Naive thymus-derived CD4-positive, alpha-beta T cell (primary cell): ENCODE measurements at regions of chr5 and their contacts with region 1.

Region 1: GRCh38 chr5:159286420-159287035 is 23.4 kb downstream of the UBLCP1 start:
- DNase-seq: peak in 7 of 9 donors; percentile 16 to 53 (median 34)
- ATAC-seq: peak; percentile 60
- H3K4me3 ChIP-seq: no peak overlapping the region
- H3K4me3 Mint-ChIP-seq: no peak overlapping the region
- H3K27ac ChIP-seq: no peak overlapping the region
- H3K27ac Mint-ChIP-seq: peak overlapping the region in 1 of 9 donors; percentile 19
- H3K4me1 ChIP-seq: no peaks in the 10 kb centered on the region
- H3K4me1 Mint-ChIP-seq: peaks cover 0 to 1% (median 0%) of the 10 kb centered on the region in 7 donors
- H3K27me3 ChIP-seq: no peaks in the 10 kb centered on the region
- H3K27me3 Mint-ChIP-seq: peaks cover 0 to 4% (median 0%) of the 10 kb centered on the region in 5 donors

Region 2: DNA sequence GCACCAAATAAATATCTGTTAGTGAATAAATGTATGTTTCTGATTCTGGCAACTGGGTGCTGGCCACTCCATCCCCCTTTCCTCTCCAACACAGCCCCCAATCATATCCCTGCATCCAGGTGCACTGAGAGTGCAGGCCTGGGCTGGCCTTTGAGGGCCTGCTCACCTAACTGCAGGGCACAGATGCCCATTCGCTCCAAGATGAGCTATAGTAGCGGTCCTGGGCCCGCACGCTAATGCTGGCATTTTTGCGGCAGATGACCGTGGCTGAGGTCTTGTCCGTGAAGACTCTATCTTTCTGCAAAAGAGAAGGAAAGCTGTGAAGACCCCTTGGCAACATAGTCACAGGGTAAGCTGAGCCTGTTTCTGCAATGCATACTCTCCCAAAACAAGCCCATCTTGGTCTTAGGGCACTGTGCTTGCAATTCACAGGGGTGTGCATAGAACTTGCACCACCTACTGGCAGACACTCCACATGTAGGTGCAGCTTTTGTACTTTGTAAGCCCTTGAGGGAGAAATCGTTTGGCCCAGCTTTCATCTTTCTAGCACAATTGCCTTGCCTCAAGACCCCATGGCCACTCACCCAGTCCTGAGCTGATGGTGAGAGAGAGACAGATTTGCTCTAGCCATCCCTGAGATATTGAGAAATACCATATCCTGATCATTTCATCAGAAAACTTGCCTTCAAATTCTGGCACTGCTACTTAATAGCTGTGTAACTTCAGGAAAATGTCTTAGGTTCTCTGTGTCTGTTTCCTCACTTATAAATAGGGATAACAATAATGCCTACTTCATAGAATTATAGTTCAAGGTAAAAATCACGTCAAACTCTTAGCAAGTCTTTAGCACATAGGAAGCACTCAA is 30.2 kb after region 1 on chr5:
- CTCF ChIA-PET with region 1: interaction called, 6 read pairs
- POLR2A ChIA-PET with region 1: no interaction called
- intact Hi-C with region 1: loop called in 1 of 2 experiments (anchors 1 kb)
- DNase-seq: peak in 7 of 9 donors; percentile 15 to 50 (median 31)
- ATAC-seq: peak; percentile 73
- H3K4me3 ChIP-seq: no peak overlapping the region
- H3K4me3 Mint-ChIP-seq: no peak overlapping the region
- H3K27ac ChIP-seq: no peak overlapping the region
- H3K27ac Mint-ChIP-seq: no peak overlapping the region
- H3K4me1 ChIP-seq: no peaks in the 10 kb centered on the region
- H3K4me1 Mint-ChIP-seq: peaks cover 0 to 4% (median 0%) of the 10 kb centered on the region in 7 donors
- H3K27me3 ChIP-seq: no peaks in the 10 kb centered on the region
- H3K27me3 Mint-ChIP-seq: peaks cover 0 to 36% (median 4%) of the 10 kb centered on the region in 5 donors

Region 3: DNA sequence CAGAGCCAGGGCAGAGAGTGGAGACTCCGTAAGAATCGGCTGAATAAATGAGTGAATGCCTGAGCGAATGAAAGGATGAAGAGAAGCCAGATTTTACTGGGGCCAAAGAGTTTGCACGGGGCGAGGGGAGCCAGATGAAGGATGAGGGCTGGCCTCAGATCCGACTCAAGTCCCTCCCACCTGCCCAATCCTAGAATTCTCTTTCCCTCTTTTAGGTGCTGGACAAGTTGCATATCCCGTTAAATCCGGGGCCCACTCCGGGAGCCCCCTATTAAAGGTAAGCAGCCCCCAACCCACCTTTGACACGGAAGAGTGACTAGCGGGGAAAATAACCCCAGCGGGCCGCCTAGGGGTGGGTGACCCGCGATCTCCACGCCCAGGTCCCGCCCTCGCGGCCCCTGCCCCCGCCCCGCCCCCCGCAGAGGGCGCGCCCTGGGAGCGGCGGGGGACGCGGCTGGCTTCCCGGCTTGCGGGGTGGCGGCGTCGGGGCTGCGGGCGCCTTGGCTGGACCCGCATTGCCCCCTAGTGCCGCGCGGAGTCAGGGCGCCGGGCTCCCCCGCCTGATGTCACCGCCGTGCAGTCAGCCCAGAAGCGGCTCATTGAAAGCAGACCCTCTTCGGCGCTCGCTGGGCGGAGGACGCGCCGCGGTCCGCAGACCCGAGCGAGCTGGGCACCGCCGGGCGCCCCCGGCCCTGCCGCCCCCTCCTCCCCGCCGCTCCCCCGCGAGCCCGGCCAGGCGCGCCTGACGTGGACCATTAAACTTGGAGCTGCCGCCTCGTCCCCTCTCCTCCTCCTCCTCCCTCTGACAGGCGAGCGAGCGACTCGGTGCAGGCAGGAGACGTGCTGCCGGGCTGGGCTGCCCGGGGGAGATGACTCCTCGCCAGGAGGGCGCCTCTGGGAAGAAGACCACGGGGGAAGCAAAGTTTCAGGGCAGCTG is 629.6 kb after region 1 on chr5 and contains the start of gene ADRA1B:
- CTCF ChIA-PET with region 1: no interaction called
- POLR2A ChIA-PET with region 1: no interaction called
- intact Hi-C with region 1: loop called (anchors 1 to 5 kb)
- DNase-seq: peak in 8 of 9 donors; percentile 16 to 47 (median 22)
- ATAC-seq: peak; percentile 77
- H3K4me3 ChIP-seq: no peak within 1 kb of the TSS
- H3K4me3 Mint-ChIP-seq: peak within 1 kb of the TSS; percentile 56 to 78 (median 71)
- H3K27ac ChIP-seq: no peak within 1 kb of the TSS
- H3K27ac Mint-ChIP-seq: no peak within 1 kb of the TSS
- H3K4me1 ChIP-seq: no peaks in the 10 kb centered on the region
- H3K4me1 Mint-ChIP-seq: peaks cover 4 to 15% (median 9%) of the 10 kb centered on the region in 7 donors
- H3K27me3 ChIP-seq: peaks cover 3 to 8% of the 10 kb centered on the region in 2 donors
- H3K27me3 Mint-ChIP-seq: peaks cover 59 to 67% (median 62%) of the 10 kb centered on the region in 5 donors
- total RNA-seq, gene ADRA1B: 0.10 TPM in 1 of 5 experiments, not detected in the others

Region 4: GRCh38 chr5:159965031-159965837 is 678.7 kb after region 1 on chr5:
- CTCF ChIA-PET with region 1: no interaction called
- POLR2A ChIA-PET with region 1: no interaction called
- intact Hi-C with region 1: loop called in 1 of 2 experiments (anchors 2 kb)
- DNase-seq: peak in 2 of 9 donors; percentile 13 to 32
- ATAC-seq: peak; percentile 55
- H3K4me3 ChIP-seq: no peak overlapping the region
- H3K4me3 Mint-ChIP-seq: no peak overlapping the region
- H3K27ac ChIP-seq: no peak overlapping the region
- H3K27ac Mint-ChIP-seq: peak overlapping the region in 1 of 9 donors; percentile 52
- H3K4me1 ChIP-seq: no peaks in the 10 kb centered on the region
- H3K4me1 Mint-ChIP-seq: peaks cover 0 to 2% (median 0%) of the 10 kb centered on the region in 7 donors
- H3K27me3 ChIP-seq: no peaks in the 10 kb centered on the region
- H3K27me3 Mint-ChIP-seq: peaks cover 33 to 55% (median 37%) of the 10 kb centered on the region in 5 donors

Region 5: GRCh38 chr5:159987031-159987674 is 700.6 kb after region 1 on chr5:
- CTCF ChIA-PET with region 1: interaction called, 44 read pairs
- POLR2A ChIA-PET with region 1: no interaction called
- intact Hi-C with region 1: loop called (anchors 1 kb)
- DNase-seq: peak; percentile 56 to 73 (median 69)
- ATAC-seq: peak; percentile 92
- H3K4me3 ChIP-seq: peak overlapping the region; percentile 58
- H3K4me3 Mint-ChIP-seq: peak overlapping the region; percentile 55 to 78 (median 66)
- H3K27ac ChIP-seq: no peak overlapping the region
- H3K27ac Mint-ChIP-seq: peak overlapping the region in 3 of 9 donors; percentile 70 to 83 (median 70)
- H3K4me1 ChIP-seq: peaks cover 0 to 6% of the 10 kb centered on the region in 2 donors
- H3K4me1 Mint-ChIP-seq: peaks cover 0 to 3% (median 0%) of the 10 kb centered on the region in 7 donors
- H3K27me3 ChIP-seq: peaks cover 0 to 5% of the 10 kb centered on the region in 2 donors
- H3K27me3 Mint-ChIP-seq: peaks cover 24 to 70% (median 34%) of the 10 kb centered on the region in 5 donors

Region 6: DNA sequence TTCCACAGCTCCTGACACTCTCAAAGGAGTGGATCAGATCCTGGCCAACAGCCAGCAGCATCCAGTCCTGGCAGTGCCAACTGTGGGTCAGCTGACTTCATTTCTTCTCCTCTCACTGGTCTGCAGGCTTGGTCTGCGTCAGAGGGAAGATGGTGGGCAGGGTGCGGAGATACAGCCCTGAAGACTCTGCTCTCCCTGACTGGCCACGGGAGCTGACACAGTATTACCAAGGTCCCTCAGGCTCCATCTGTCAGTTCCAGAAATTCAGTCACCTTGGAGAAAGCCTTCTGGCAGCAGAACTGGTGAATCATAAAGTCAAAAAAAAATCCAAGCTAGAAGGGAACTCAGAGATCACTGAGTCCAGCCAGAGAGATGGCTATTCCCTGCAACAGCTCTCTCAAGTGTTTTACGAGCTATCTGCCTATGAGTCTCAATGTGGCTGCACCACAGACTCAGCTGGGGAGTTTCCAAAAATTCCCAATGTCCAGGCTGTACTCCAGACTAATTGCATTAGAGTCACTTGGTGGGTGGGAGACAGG is 1055.9 kb after region 1 on chr5:
- CTCF ChIA-PET with region 1: no interaction called
- POLR2A ChIA-PET with region 1: no interaction called
- intact Hi-C with region 1: loop called in 1 of 2 experiments (anchors 10 kb)
- DNase-seq: no peak
- ATAC-seq: no peak
- H3K4me3 ChIP-seq: no peak overlapping the region
- H3K4me3 Mint-ChIP-seq: no peak overlapping the region
- H3K27ac ChIP-seq: no peak overlapping the region
- H3K27ac Mint-ChIP-seq: no peak overlapping the region
- H3K4me1 ChIP-seq: no peaks in the 10 kb centered on the region
- H3K4me1 Mint-ChIP-seq: peaks cover 0 to 4% (median 0%) of the 10 kb centered on the region in 7 donors
- H3K27me3 ChIP-seq: no peaks in the 10 kb centered on the region
- H3K27me3 Mint-ChIP-seq: peaks cover 0 to 4% (median 0%) of the 10 kb centered on the region in 5 donors

Region 7: GRCh38 chr5:161155461-161155860 is 1868.9 kb after region 1 on chr5:
- CTCF ChIA-PET with region 1: no interaction called
- POLR2A ChIA-PET with region 1: no interaction called
- intact Hi-C with region 1: no loop called
- DNase-seq: no peak
- ATAC-seq: no peak
- H3K4me3 ChIP-seq: no peak overlapping the region
- H3K4me3 Mint-ChIP-seq: no peak overlapping the region
- H3K27ac ChIP-seq: no peak overlapping the region
- H3K27ac Mint-ChIP-seq: no peak overlapping the region
- H3K4me1 ChIP-seq: no peaks in the 10 kb centered on the region
- H3K4me1 Mint-ChIP-seq: no peaks in the 10 kb centered on the region
- H3K27me3 ChIP-seq: no peaks in the 10 kb centered on the region
- H3K27me3 Mint-ChIP-seq: peaks cover 0 to 13% (median 0%) of the 10 kb centered on the region in 5 donors